Gastrocnemius medialis (tissue), 4 donors: ENCODE measurements at regions of chr11 and their contacts with region 1.

Region 1: DNA sequence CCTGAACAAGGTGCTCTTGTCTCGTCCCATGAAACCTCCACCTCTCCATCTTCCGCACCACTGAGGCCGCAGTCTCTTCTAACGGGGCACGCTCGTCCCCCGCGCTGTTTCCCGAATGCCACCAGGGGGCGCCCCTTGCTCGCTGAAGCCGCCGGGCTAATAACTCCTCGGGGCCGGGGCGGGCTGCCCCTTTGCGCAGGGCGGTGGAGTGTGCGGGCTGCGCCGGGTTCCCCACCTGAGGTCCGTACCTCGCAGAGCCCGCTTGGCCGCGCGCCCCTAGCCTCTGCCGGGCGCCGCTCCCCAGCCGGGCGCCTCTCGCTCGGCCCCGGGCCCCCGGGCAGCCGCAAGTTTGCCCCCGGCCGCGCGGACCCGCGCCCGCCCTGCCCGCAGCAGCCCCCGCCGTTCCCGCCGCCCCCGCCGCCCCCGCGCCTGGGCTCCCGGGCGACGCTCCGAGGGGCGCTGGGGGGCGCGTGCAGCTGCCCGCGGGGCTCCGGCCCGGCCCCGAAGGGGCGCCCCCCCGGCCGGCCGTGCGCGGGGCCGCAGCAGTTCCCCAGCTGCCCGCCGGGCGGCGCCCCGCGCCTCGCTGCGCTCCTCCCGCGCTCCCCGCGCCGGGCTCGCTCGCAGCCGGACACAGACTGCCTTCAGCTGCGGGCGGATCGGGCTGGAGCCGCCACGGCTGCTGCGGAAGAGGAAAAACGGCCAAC is at the start of gene GRIK4:
- DNase-seq: peak; percentile 53 to 70
- ATAC-seq: peak; percentile 87 to 88
- H3K4me3 ChIP-seq: peak within 1 kb of the TSS in 3 of 4 donors; percentile 27 to 38 (median 31)
- H3K27ac ChIP-seq: no peak within 1 kb of the TSS
- H3K4me1 ChIP-seq: no peaks in the 10 kb centered on the region
- H3K27me3 ChIP-seq: peaks cover 10 to 24% (median 11%) of the 10 kb centered on the region in 3 donors
- CTCF ChIP-seq: peak; percentile 87 to 93 (median 90)
- POLR2A ChIP-seq: no peak
- total RNA-seq, gene GRIK4: 0.42 TPM in 1 of 4 donors, not detected in the others

Region 2: DNA sequence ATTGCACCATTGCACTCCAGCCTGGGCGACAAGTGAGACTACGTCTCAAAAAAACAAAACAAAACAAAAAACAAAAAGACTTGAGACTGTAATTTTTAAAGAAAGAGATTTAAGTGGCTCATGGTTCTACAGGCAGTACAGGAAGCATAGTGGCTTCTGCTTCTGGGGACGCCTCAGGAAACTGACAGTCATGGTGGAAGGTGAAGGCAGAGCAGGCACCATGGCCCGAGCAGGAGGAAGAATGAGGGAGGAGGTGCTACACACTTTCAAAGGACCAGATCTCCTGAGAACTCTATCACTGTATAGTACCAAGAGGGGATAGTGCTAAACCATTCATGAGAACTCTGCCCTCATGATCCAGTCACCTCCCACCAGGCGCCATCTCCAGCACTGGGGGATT is 1253.1 kb before region 1 on chr11:
- in situ Hi-C with region 1: no loop called
- intact Hi-C with region 1: no loop called
- DNase-seq: no peak
- ATAC-seq: no peak
- H3K4me3 ChIP-seq: no peak overlapping the region
- H3K27ac ChIP-seq: no peak overlapping the region
- H3K4me1 ChIP-seq: peaks cover 8 to 14% of the 10 kb centered on the region in 2 donors
- H3K27me3 ChIP-seq: no peaks in the 10 kb centered on the region
- CTCF ChIP-seq: no peak
- POLR2A ChIP-seq: no peak

Region 3: DNA sequence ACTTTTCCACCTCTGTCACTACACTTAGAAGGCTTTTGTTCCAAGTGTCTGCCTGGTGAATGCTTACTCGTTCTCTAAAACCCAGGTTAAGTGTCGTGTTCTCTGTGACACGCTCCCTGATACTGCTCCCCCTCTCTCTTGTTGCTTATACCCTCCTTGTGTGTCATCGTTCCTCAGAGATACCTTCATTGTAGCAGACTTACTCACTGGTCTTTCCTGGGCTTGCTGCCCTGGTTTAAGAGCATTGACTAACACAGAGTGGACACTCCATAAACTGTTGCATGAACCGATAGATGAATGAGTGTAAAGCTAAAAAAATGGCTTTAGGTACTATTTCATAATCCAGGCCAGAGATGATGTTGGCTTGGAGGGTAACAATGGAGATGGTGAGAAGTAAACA is 171.6 kb after region 1 on chr11:
- in situ Hi-C with region 1: loop called (anchors 5 to 10 kb)
- intact Hi-C with region 1: loop called (anchors 1 kb)
- DNase-seq: no peak
- ATAC-seq: no peak
- H3K4me3 ChIP-seq: no peak overlapping the region
- H3K27ac ChIP-seq: no peak overlapping the region
- H3K4me1 ChIP-seq: no peaks in the 10 kb centered on the region
- H3K27me3 ChIP-seq: peaks cover 0 to 5% (median 0%) of the 10 kb centered on the region in 3 donors
- CTCF ChIP-seq: no peak
- POLR2A ChIP-seq: no peak

Region 4: DNA sequence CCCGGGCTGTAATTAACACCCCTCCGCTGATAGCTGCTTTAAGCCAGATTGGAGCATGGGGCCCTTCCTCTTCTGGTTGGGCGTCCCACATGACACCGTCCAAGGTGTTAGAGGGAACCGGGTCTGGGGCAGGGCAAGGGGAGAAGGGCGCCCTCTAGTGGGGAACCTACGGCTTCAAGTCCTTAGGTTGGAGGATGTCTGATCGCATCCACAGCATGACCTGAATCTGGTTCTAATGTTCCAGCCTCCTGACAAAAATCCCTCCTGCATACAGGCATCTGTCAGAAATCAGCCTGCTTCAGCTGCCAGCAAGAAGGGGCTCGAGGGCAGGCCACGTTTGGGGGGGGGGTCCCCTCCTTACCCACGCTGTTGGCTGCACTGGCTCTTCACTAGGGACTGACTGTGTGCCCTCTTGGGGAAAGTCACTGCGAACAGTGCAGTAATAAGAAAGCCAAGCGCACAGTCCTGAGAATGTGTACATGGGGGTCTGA is 418.4 kb after region 1 on chr11:
- in situ Hi-C with region 1: loop called in 1 of 4 experiments (anchors 25 kb)
- intact Hi-C with region 1: no loop called
- DNase-seq: no peak
- ATAC-seq: no peak
- H3K4me3 ChIP-seq: no peak overlapping the region
- H3K27ac ChIP-seq: no peak overlapping the region
- H3K4me1 ChIP-seq: no peaks in the 10 kb centered on the region
- H3K27me3 ChIP-seq: no peaks in the 10 kb centered on the region
- CTCF ChIP-seq: peak in 3 of 5 experiments; percentile 29 to 49 (median 37)
- POLR2A ChIP-seq: no peak

Region 5: GRCh38 chr11:120952461-120953434 is 441.5 kb after region 1 on chr11:
- in situ Hi-C with region 1: loop called (anchors 10 to 25 kb)
- intact Hi-C with region 1: loop called (anchors 1 kb)
- DNase-seq: peak; percentile 35 to 57
- ATAC-seq: peak; percentile 86 to 87
- H3K4me3 ChIP-seq: peak overlapping the region in 2 of 4 donors; percentile 22 to 50
- H3K27ac ChIP-seq: no peak overlapping the region
- H3K4me1 ChIP-seq: peaks cover 0 to 5% of the 10 kb centered on the region in 2 donors
- H3K27me3 ChIP-seq: peaks cover 6 to 10% (median 10%) of the 10 kb centered on the region in 3 donors
- CTCF ChIP-seq: peak; percentile 44 to 74 (median 51)
- POLR2A ChIP-seq: no peak

Region 6: GRCh38 chr11:121112498-121113455 is 601.5 kb after region 1 on chr11:
- in situ Hi-C with region 1: loop called in 2 of 4 experiments (anchors 25 kb)
- intact Hi-C with region 1: loop called (anchors 1 kb)
- DNase-seq: peak; percentile 27 to 58
- ATAC-seq: peak; percentile 79 to 94
- H3K4me3 ChIP-seq: no peak overlapping the region
- H3K27ac ChIP-seq: no peak overlapping the region
- H3K4me1 ChIP-seq: peaks cover 0 to 3% of the 10 kb centered on the region in 2 donors
- H3K27me3 ChIP-seq: no peaks in the 10 kb centered on the region
- CTCF ChIP-seq: peak; percentile 23 to 60 (median 44)
- POLR2A ChIP-seq: no peak

Region 7: GRCh38 chr11:121194731-121195596 is 683.7 kb after region 1 on chr11:
- in situ Hi-C with region 1: loop called in 3 of 4 experiments (anchors 10 to 25 kb)
- intact Hi-C with region 1: loop called (anchors 1 kb)
- DNase-seq: peak in 1 of 2 donors; percentile 14
- ATAC-seq: peak; percentile 70
- H3K4me3 ChIP-seq: no peak overlapping the region
- H3K27ac ChIP-seq: no peak overlapping the region
- H3K4me1 ChIP-seq: no peaks in the 10 kb centered on the region
- H3K27me3 ChIP-seq: peaks cover 0 to 3% (median 0%) of the 10 kb centered on the region in 3 donors
- CTCF ChIP-seq: peak; percentile 37 to 83 (median 69)
- POLR2A ChIP-seq: no peak